SK-N-SH (cell line): ENCODE measurements at regions of chr20 and their contacts with region 1.

Region 1: DNA sequence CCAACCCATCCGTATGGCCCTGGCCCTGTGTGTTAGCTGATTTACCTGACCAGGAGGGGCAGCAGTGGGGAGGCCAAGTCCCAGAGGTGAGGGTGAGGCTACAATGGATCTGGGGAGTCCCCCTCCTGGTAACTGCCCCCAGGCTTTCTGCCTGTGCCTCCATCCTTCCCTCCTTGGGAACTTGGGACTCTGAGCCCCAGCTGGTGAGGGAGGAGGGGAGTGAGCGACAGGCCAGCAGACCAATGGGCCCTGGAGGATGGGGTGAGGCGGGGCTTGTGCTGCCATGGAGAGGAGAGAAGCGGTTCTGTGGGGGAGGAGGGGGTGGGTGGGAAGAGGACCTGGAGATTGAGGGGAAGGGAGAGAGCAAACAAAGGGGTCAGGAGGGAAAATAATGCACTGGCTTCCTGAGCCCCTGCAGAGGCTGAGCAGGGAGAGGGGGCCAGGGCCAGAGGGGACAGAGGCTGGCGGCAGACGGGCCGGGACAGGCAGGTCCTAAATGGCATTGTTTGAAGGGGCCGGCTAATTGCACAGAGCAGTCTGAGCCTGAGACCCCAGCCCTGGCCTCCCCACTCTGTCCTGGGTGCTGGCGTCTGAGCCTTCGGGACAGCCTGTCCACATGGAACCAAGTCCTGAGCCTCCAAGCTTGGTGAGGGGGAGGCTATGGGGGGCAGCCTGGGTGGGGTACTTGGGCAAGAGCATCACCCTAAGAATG is 17.5 kb downstream of the DNMT3B start:
- DNase-seq: peak; percentile 69
- H3K4me3 ChIP-seq: no peak overlapping the region
- H3K27ac ChIP-seq: no peak overlapping the region
- H3K4me1 ChIP-seq: peaks cover 0 to 16% of the 10 kb centered on the region in 2 experiments; a peak in 3 of 4 replicates
- H3K27me3 ChIP-seq: no peaks in the 10 kb centered on the region
- CTCF ChIP-seq: no peak
- EP300 ChIP-seq: no peak
- RAD21 ChIP-seq: no peak

Region 2: DNA sequence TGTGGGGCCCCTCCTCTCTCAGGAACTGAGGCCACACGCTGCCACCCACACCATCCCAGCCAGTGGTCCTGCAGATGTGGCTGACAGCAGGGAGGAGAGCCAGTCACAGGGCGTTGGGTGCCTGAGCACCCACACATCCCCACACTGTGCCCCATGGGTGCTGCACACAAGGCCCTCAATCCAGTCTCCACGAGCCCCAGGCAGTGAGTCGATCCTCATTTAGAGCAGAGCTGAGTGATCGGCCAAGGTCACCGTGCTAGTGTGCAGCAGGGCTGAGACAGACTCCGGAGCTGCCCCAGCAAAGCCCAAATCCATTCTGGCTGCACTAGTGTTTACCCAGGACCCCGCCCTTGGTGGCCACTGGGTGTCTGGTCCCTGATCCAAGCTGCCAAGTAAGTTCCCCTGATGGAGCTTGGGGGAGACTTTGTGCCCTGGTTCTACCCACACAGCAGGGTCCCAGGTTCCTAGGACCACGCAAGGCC is 114.9 kb before region 1 on chr20:
- CTCF ChIA-PET with region 1: interaction called, 10 read pairs
- POLR2A ChIA-PET with region 1: no interaction called
- DNase-seq: no peak
- H3K4me3 ChIP-seq: no peak overlapping the region
- H3K27ac ChIP-seq: no peak overlapping the region
- H3K4me1 ChIP-seq: no peaks in the 10 kb centered on the region; a peak in 1 of 4 replicates
- H3K27me3 ChIP-seq: no peaks in the 10 kb centered on the region
- CTCF ChIP-seq: no peak
- EP300 ChIP-seq: no peak
- RAD21 ChIP-seq: no peak

Region 3: DNA sequence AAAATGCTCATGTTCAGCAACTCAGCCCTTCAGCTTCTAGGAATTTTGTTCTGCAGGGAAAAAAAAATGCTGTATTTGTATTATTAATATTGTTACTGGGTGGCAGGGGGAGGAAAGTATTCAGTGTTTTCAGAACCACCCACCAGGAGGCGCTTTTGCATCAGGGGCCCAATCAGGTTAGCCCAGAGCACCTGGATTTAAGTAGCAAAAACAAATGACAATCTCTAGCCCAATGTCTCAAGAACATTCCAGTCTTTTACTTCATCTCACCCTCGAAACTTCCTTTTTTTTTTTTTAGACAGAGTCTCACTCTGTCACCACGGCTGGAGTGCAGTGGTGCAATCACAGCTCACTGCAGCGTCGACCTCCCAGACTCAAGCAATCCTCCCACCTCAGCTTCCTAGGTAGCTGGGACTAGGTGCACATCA is 105.3 kb before region 1 on chr20:
- CTCF ChIA-PET with region 1: interaction called, 101 read pairs
- POLR2A ChIA-PET with region 1: interaction called, 3 read pairs
- DNase-seq: peak; percentile 72
- H3K4me3 ChIP-seq: no peak overlapping the region; a peak in 1 of 4 replicates
- H3K27ac ChIP-seq: no peak overlapping the region
- H3K4me1 ChIP-seq: peaks cover 0 to 5% of the 10 kb centered on the region in 2 experiments; a peak in 1 of 4 replicates
- H3K27me3 ChIP-seq: no peaks in the 10 kb centered on the region
- CTCF ChIP-seq: peak; percentile 89
- EP300 ChIP-seq: no peak
- RAD21 ChIP-seq: peak; percentile 90

Region 4: GRCh38 chr20:32743237-32744112 is 36.2 kb before region 1 on chr20 and contains the start of gene COMMD7:
- CTCF ChIA-PET with region 1: interaction called, 11 read pairs
- POLR2A ChIA-PET with region 1: interaction called, 6 read pairs
- DNase-seq: peak; percentile 86
- H3K4me3 ChIP-seq: peak within 1 kb of the TSS; percentile 59 to 78
- H3K27ac ChIP-seq: peak within 1 kb of the TSS; percentile 29 to 56; a peak in 3 of 4 replicates
- H3K4me1 ChIP-seq: peaks cover 8 to 13% of the 10 kb centered on the region in 2 experiments; a peak in 1 of 4 replicates
- H3K27me3 ChIP-seq: no peaks in the 10 kb centered on the region
- CTCF ChIP-seq: no peak
- EP300 ChIP-seq: peak in 1 of 2 experiments; percentile 56; a peak in 1 of 4 replicates
- RAD21 ChIP-seq: no peak
- polyA plus RNA-seq, gene COMMD7: 38.0 and 46.0 TPM in 2 replicates

Region 5: DNA sequence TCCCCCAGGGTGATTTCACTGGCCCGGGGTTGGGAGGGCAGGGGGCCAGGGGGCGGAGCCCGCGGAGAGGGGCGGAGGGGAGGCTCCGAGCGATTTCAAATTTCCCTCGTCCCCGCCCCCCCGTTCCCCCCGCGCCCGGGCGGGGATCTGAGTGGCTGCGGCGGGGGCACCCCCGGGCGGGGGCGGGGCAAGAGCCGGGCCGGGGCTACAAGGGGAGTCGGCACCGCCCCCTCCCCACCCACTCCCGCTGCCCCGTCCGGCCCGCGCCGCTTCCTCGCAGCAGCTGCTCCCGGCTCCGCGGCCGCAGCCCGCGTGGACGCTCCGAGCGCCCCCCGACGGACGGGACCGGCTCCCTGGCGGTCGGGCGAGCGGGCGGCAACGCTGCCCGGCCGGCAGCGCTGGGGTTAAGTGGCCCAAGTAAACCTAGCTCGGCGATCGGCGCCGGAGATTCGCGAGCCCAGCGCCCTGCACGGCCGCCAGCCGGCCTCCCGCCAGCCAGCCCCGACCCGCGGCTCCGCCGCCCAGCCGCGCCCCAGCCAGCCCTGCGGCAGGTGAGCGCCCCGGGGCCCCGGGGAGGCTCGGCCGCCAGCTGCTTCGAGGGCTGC is 17.4 kb before region 1 on chr20 and contains the start of gene DNMT3B:
- CTCF ChIA-PET with region 1: interaction called, 39 read pairs
- POLR2A ChIA-PET with region 1: interaction called, 5 read pairs
- DNase-seq: peak; percentile 99
- H3K4me3 ChIP-seq: peak within 1 kb of the TSS; percentile 72 to 86
- H3K27ac ChIP-seq: peak within 1 kb of the TSS in 1 of 2 experiments; percentile 8; a peak in 1 of 4 replicates
- H3K4me1 ChIP-seq: peaks cover 0 to 12% of the 10 kb centered on the region in 2 experiments; a peak in 2 of 4 replicates
- H3K27me3 ChIP-seq: no peaks in the 10 kb centered on the region
- CTCF ChIP-seq: peak; percentile 28
- EP300 ChIP-seq: peak in 1 of 2 experiments; percentile 45; a peak in 1 of 4 replicates
- RAD21 ChIP-seq: peak; percentile 26; the same call in 1 of the 2 replicates
- polyA plus RNA-seq, gene DNMT3B: 2.2 and 2.4 TPM in 2 replicates